AG04450 (cell line): ENCODE measurements at regions of chr15 and their contacts with region 1.

Region 1: GRCh38 chr15:85330901-85331588 is 49.4 kb upstream of the AKAP13 start:
- DNase-seq: no peak
- H3K4me3 ChIP-seq: no peak overlapping the region
- H3K27ac ChIP-seq: peak overlapping the region; percentile 88
- H3K27me3 ChIP-seq: no peaks in the 10 kb centered on the region
- CTCF ChIP-seq: peak; percentile 80

Region 2: DNA sequence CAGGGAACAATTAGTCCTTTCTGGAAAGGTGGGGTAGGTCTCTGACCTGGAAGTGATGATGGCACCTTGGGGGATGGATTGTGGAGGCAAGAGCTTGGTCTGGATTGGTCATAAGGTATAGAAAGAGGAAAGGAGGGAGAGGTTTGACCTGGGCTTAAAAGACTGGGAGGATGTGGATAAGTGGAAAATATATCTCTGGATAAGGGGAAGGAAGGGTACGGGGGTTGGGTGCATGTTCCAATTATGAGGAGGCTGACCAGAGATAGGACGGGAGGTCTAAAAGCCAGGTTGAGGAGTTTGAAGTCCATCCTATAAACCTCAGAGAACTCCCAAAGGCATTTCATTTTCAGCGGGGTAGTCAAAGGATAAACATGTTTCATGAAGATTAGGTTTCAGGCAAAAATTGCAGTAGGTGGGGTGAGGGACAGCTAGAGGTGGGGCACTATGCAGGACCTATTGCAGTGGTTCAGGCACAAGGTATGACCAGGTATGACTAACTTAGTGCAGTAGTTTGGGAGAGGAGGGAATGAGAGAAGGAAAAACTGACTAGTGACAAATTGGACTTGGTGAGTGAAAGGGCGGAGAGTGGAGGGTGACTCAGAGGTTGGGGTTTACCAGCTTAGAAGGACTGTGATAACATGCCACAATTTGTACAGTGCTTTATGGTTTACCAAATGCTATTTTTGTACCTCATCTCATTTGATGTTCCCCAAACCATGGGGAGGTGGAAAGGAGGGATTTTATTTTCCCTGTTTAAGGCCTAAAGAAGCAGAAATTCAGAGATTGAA is 338.7 kb before region 1 on chr15:
- CTCF ChIA-PET with region 1: no interaction called
- POLR2A ChIA-PET with region 1: no interaction called
- DNase-seq: peak; percentile 21
- H3K4me3 ChIP-seq: no peak overlapping the region
- H3K27ac ChIP-seq: no peak overlapping the region
- H3K27me3 ChIP-seq: no peaks in the 10 kb centered on the region
- CTCF ChIP-seq: no peak

Region 3: DNA sequence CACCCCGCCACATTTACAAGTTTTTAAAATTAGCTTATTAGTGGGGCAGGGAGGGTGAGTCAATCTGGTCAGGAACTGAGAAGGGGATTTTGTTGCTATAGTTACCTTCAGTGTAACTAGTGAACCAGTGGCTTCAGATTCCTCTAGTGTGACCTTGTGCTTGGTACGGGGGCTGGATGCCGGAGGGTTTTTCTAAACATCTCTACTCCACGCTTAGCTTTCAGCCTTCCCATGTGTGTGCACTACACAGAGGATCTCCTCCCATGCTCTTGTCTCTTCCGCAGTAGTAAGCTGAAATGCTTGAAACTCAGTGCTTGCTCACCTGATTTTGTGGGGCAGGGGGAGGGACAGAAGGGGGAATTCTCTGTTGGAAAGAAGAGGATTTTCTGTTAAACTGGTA is 18.6 kb before region 1 on chr15:
- CTCF ChIA-PET with region 1: interaction called, 13 read pairs
- POLR2A ChIA-PET with region 1: interaction called, 16 read pairs
- DNase-seq: no peak
- H3K4me3 ChIP-seq: no peak overlapping the region
- H3K27ac ChIP-seq: peak overlapping the region; percentile 75
- H3K27me3 ChIP-seq: no peaks in the 10 kb centered on the region
- CTCF ChIP-seq: no peak

Region 4: DNA sequence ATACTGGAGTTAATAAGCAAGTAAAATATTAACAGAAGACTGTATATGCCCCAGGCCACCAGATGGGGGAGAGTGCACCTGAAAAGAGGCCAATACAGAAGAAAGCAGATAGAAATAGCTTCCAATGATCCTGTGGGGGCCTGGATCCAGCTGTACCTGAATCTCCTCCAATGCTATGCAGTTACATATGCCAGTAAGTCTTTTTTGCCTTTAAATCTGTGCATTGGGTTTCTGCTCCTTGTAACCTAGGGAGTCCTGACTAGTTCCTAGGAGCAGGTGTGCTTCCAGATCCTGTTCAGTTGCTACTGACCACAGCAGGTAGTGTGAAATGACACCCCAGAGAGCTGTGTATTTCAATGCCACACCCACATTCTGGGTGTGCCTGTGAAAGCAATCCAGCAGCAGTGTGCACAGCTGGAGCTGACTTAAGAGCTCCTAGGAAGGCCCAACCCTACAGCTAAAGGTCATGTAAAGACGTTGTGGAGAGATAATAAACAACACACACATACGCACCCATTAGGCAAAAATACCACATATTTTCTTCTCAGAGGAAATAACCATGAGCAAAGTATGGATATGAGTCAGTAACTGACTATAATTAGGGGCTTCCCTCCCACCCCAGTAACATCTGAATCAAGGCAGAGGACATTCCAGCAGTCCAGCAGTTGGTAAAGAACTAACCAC is 12.9 kb before region 1 on chr15:
- CTCF ChIA-PET with region 1: interaction called, 13 read pairs
- POLR2A ChIA-PET with region 1: interaction called, 16 read pairs
- DNase-seq: peak; percentile 82
- H3K4me3 ChIP-seq: no peak overlapping the region
- H3K27ac ChIP-seq: peak overlapping the region; percentile 92
- H3K27me3 ChIP-seq: no peaks in the 10 kb centered on the region
- CTCF ChIP-seq: 0 out of 2 replicates have a peak, but pooled peaks have one; percentile 32

Region 5: DNA sequence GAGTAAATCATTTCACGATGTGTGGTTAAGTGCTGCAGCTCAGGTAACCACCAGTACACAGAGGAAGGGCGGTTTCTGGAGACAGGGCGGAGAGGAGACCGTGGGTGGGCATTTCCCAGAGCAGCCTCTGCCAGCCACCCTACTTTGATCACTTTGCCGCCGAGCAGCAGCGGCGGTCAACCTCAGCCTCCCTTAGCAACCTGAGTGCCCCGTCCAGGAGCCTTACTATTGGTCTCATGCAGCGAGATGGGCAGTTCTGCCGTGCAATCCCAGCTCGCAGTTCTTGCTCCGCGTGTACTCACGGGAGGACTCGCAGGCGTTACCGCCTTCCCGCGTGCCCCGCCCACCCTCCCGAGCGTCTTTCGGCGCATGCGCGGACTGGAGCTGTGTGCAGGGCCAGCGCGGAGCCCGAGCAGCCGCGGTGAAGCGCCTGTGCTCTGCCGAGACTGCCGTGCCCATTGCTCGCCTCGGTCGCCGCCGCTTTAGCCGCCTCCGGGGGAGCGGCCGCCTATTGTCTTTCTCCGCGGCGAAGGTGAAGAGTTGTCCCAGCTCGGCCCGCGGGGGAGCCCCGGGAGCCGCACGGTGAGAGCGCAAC is 49.3 kb after region 1 on chr15 and contains the start of gene AKAP13:
- CTCF ChIA-PET with region 1: no interaction called
- POLR2A ChIA-PET with region 1: interaction called, 10 read pairs
- DNase-seq: peak; percentile 99
- H3K4me3 ChIP-seq: peak within 1 kb of the TSS; percentile 70
- H3K27ac ChIP-seq: peak within 1 kb of the TSS; percentile 80
- H3K27me3 ChIP-seq: no peaks in the 10 kb centered on the region
- CTCF ChIP-seq: no peak
- polyA plus RNA-seq, gene AKAP13: 15.5 and 21.9 TPM in 2 replicates

Region 6: GRCh38 chr15:85582131-85583079 is 251.4 kb after region 1 on chr15:
- CTCF ChIA-PET with region 1: no interaction called
- POLR2A ChIA-PET with region 1: no interaction called
- DNase-seq: no peak
- H3K4me3 ChIP-seq: no peak overlapping the region
- H3K27ac ChIP-seq: no peak overlapping the region
- H3K27me3 ChIP-seq: no peaks in the 10 kb centered on the region
- CTCF ChIP-seq: no peak